ENCODE measurements at regions of chr9 and their contacts with region 1.

Region 1: DNA sequence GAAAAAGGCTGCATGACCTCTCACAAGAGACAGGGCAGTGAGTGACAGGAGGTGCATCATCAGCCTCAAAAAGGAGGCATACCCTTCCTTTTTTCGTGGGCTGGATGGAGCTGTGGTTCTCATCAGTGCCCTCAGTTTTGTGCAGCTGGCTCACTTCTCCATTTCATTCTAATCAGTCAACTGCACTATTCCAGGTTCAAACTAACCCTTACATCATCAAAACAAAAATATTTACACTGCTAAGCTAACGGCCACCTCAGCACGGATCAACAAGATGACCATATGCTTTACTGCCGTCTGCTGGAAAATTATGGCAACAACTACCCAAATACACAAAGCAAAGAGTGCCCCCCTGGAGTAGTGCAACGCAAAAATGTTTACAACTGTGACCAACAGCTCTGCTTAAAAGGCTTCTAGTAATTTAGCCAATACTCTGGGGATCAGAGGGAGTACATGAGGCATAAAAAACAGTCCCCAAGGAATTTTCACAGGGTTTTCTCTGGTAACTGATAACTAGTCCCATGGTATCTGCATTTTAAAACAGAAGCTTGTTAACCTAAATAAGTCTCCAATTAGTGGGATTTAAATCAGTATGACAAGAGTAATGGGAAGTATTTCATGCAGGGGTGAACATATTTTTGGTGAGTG is 10.8 kb downstream of the KCNV2 start:
- DNase-seq: peak; percentile 48
- H3K4me3 ChIP-seq: no peak overlapping the region
- H3K27ac ChIP-seq: no peak overlapping the region
- H3K27me3 ChIP-seq: no peaks in the 10 kb centered on the region
- CTCF ChIP-seq: peak; percentile 82

Region 2: GRCh38 chr9:2132484-2133082 is 595.5 kb before region 1 on chr9:
- CTCF ChIA-PET with region 1: interaction called, 19 read pairs
- POLR2A ChIA-PET with region 1: no interaction called
- DNase-seq: no peak
- H3K4me3 ChIP-seq: no peak overlapping the region
- H3K27ac ChIP-seq: no peak overlapping the region
- H3K27me3 ChIP-seq: no peaks in the 10 kb centered on the region
- CTCF ChIP-seq: peak; percentile 80

Region 3: DNA sequence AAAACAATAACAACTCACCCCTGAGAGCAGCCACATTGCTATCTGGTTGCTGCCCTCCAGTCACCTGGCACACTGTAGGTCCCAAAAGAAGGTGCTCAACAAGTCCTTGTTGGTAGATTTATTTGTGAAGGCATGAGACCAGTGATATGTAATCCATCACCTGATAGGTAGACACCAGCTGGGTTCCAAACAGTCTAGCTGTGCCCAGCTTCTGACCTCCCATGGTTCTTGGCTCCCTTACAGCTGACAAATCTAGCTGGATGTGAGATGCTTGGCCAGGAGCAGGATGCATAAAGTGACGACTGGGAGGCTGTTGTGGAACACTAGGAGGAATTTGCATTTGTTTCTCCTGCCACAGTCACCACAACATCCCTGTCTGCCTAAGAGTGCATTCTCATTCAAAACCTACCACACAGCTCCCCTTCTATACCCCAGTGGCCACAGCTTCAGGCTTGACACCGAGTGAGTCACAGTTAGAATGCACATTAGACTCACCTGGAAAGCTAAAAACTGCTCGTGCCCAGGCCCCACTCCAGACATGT is 114.3 kb before region 1 on chr9:
- CTCF ChIA-PET with region 1: no interaction called
- POLR2A ChIA-PET with region 1: no interaction called
- DNase-seq: no peak
- H3K4me3 ChIP-seq: no peak overlapping the region
- H3K27ac ChIP-seq: no peak overlapping the region
- H3K27me3 ChIP-seq: no peaks in the 10 kb centered on the region
- CTCF ChIP-seq: no peak

Region 4: DNA sequence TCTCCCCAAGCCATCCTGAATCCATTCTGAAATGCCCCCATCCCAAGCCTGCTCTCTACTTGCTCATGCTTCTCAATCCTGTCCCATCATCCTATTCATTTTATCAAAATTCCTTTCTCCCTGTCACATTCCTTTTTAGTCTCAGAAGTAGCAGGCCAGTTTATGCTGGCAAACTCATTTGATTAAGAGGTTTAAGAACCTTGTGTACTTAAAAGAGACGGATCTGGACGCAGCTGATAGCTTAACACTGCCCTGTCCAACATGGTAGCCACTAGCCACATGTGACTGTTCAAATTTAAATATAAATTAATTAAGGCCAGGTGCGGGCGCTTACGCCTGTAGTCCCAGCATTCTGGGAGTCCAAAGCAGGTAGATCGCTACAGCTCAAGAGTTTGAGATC is 16.4 kb before region 1 on chr9:
- CTCF ChIA-PET with region 1: interaction called, 12 read pairs
- POLR2A ChIA-PET with region 1: no interaction called
- DNase-seq: no peak
- H3K4me3 ChIP-seq: no peak overlapping the region
- H3K27ac ChIP-seq: no peak overlapping the region
- H3K27me3 ChIP-seq: no peaks in the 10 kb centered on the region
- CTCF ChIP-seq: no peak

Region 5: DNA sequence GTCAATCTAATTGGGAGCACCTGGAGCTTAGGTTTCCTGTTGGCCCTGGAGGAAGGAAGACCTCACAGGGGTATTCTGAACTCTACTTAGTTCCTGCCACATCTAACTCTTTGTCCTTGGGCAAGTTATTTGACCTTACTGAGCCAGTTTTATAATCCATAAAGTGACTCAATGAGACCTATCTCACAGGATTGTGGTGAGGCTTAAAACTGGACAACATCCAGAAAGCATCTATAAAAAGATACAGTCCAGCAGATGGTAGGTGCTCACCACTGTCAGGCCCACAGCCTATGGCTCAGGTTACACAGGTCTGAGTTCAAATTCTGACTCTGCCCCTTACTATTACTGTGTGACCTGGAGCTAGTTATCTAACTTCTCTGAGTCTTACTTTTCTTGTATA is 12.5 kb after region 1 on chr9:
- CTCF ChIA-PET with region 1: interaction called, 16 read pairs
- POLR2A ChIA-PET with region 1: no interaction called
- DNase-seq: no peak
- H3K4me3 ChIP-seq: no peak overlapping the region
- H3K27ac ChIP-seq: no peak overlapping the region
- H3K27me3 ChIP-seq: no peaks in the 10 kb centered on the region
- CTCF ChIP-seq: no peak

Measured in AG04450 (cell line).